Breast epithelium (tissue), 4 donors: ENCODE measurements at regions of chr1 and their contacts with region 1.

Region 1: GRCh38 chr1:108653431-108654105 is 7.3 kb downstream of the HENMT1 start:
- DNase-seq: no peak
- H3K4me3 ChIP-seq: no peak overlapping the region
- H3K27ac ChIP-seq: no peak overlapping the region
- H3K4me1 ChIP-seq: no peaks in the 10 kb centered on the region
- H3K27me3 ChIP-seq: no peaks in the 10 kb centered on the region
- CTCF ChIP-seq: no peak
- POLR2A ChIP-seq: no peak

Region 2: GRCh38 chr1:107420559-107420958 is 1233.0 kb before region 1 on chr1:
- intact Hi-C with region 1: loop called (anchors 5 kb)
- DNase-seq: no peak
- H3K4me3 ChIP-seq: no peak overlapping the region
- H3K27ac ChIP-seq: no peak overlapping the region
- H3K4me1 ChIP-seq: peaks cover 0 to 4% of the 10 kb centered on the region in 2 donors
- H3K27me3 ChIP-seq: no peaks in the 10 kb centered on the region
- CTCF ChIP-seq: no peak
- POLR2A ChIP-seq: no peak

Region 3: GRCh38 chr1:110630839-110631663 is 1977.5 kb after region 1 on chr1:
- intact Hi-C with region 1: no loop called
- DNase-seq: peak; percentile 41 to 73
- H3K4me3 ChIP-seq: no peak overlapping the region
- H3K27ac ChIP-seq: no peak overlapping the region
- H3K4me1 ChIP-seq: no peaks in the 10 kb centered on the region
- H3K27me3 ChIP-seq: no peaks in the 10 kb centered on the region
- CTCF ChIP-seq: peak; percentile 58 to 80 (median 76)
- POLR2A ChIP-seq: no peak